ENCODE measurements at regions of chr12 and their contacts with region 1.

Region 1: GRCh38 chr12:25614813-25615518 is 61.9 kb upstream of the LMNTD1 start:
- DNase-seq: no peak
- H3K4me3 ChIP-seq: no peak overlapping the region
- H3K27ac ChIP-seq: no peak overlapping the region
- H3K4me1 ChIP-seq: no peaks in the 10 kb centered on the region
- H3K27me3 ChIP-seq: no peaks in the 10 kb centered on the region
- CTCF ChIP-seq: no peak
- POLR2A ChIP-seq: no peak

Region 2: GRCh38 chr12:25377469-25378177 is 237.3 kb before region 1 on chr12:
- intact Hi-C with region 1: no loop called
- DNase-seq: no peak
- H3K4me3 ChIP-seq: no peak overlapping the region
- H3K27ac ChIP-seq: no peak overlapping the region
- H3K4me1 ChIP-seq: no peaks in the 10 kb centered on the region
- H3K27me3 ChIP-seq: no peaks in the 10 kb centered on the region
- CTCF ChIP-seq: no peak
- POLR2A ChIP-seq: no peak

Region 3: GRCh38 chr12:25592725-25593495 is 22.1 kb before region 1 on chr12:
- intact Hi-C with region 1: loop called (anchors 1 kb)
- DNase-seq: no peak
- H3K4me3 ChIP-seq: no peak overlapping the region
- H3K27ac ChIP-seq: no peak overlapping the region
- H3K4me1 ChIP-seq: no peaks in the 10 kb centered on the region
- H3K27me3 ChIP-seq: no peaks in the 10 kb centered on the region
- CTCF ChIP-seq: no peak
- POLR2A ChIP-seq: no peak

Measured in breast epithelium (tissue), 4 donors.